ENCODE measurements at regions of chr3 and their contacts with region 1.

Region 1: GRCh38 chr3:13648060-13649001 is 99.4 kb downstream of the FBLN2 start:
- DNase-seq: peak; percentile 82
- H3K4me3 Mint-ChIP-seq: no peak overlapping the region
- H3K27ac Mint-ChIP-seq: no peak overlapping the region
- H3K4me1 Mint-ChIP-seq: peaks cover 18% of the 10 kb centered on the region
- H3K27me3 Mint-ChIP-seq: peaks cover 14% of the 10 kb centered on the region

Region 2: DNA sequence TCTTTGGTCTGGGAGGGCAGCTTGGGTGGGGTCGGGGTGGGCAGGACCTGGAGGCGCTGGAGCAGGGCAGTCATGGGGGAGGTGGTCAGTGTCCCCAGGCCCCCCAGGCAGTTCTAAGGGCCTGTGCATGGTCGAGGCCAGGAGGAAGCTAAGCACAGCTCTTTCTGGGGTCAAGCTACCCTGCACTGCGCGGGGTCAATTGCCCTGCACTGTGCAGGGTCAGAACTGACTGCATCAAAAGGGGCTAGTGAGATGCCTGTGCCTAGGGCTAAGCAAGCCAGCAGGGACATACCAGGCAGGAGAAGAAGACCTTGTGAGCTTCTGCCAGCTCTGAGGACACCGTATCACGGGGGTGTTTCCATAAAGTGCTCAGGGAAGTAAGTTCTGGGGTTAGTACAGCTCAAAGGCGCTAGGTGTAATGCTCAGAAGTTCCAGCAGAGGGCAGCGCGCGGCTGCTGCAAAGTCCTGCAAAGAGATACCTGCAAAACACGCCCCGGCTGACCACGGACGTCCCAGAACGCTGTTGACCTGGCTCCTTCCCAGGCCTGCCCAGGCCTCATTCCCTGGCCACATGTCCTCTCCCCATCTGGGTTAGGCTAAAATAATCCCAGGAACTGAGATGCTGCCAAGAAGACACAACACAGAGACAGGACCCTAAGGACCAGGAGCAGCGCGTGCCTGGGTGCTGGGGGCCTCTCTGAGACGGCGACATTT is 556.3 kb before region 1 on chr3:
- CTCF ChIA-PET with region 1: interaction called, 3 read pairs
- intact Hi-C with region 1: loop called (anchors 1 kb)
- DNase-seq: peak; percentile 89
- H3K4me3 Mint-ChIP-seq: no peak overlapping the region
- H3K27ac Mint-ChIP-seq: no peak overlapping the region
- H3K4me1 Mint-ChIP-seq: peaks cover 5% of the 10 kb centered on the region
- H3K27me3 Mint-ChIP-seq: no peaks in the 10 kb centered on the region

Region 3: DNA sequence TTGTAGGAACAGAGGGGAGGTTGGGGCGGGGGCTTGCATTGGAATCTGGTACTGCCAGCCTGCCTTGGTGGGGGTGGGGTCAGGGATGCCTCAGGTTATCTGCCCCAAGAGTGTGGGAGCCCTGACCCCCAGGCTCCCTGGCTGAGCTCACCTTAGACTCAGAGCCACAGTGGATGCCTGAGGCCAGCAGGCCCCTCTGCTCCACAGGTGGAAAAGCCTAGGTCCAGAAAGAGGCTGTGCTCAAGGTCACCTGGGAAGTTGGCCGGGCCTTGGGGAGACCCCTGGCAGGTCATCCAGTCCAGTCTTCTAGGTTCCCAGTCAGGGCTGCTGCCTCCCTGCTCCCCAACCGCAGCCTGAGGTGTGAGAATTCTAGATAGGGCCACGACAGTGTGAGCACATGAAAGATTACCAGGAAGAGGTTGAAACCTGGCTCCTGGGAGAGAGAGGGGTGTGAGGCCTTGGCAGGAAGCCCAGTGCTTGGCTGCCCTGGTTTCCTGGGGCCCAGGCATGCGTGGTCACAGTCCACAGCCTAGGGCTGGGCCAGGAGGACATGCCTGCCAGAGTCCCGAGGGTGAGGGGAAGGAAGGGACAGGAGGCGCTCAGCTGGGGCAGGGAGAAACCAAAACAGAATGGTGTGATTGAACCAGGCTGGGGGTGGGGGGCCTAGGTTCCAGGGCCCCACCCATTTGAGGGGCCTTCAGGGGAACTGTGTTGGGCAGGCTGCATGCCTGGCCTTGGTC is 163.3 kb before region 1 on chr3:
- CTCF ChIA-PET with region 1: interaction called, 344 read pairs
- intact Hi-C with region 1: loop called (anchors 5 kb)
- DNase-seq: peak; percentile 25
- H3K4me3 Mint-ChIP-seq: no peak overlapping the region
- H3K27ac Mint-ChIP-seq: no peak overlapping the region
- H3K4me1 Mint-ChIP-seq: peaks cover 19% of the 10 kb centered on the region
- H3K27me3 Mint-ChIP-seq: no peaks in the 10 kb centered on the region

Region 4: DNA sequence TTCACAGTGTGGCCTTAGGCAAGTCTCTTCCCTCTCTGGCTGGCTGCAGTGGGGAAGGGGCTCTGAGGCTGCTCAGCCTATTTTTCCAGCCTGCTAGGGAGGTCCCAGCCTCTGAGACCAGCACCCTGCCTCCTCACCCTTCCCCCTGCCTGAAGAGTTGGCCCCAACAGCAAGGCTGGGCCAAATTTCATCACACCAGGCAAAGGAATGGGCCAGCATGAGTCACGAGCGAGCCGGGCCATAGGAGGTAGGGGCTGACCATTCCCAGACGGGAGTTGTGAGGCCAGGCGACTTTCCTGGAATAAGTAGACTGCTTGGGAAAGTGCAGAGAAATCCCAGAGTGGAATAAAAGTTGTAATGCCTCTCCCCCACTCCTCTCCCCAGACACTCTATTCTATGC is 105.1 kb before region 1 on chr3:
- CTCF ChIA-PET with region 1: interaction called, 9 read pairs
- intact Hi-C with region 1: loop called (anchors 5 kb)
- DNase-seq: no peak
- H3K4me3 Mint-ChIP-seq: no peak overlapping the region
- H3K27ac Mint-ChIP-seq: no peak overlapping the region
- H3K4me1 Mint-ChIP-seq: peaks cover 19% of the 10 kb centered on the region
- H3K27me3 Mint-ChIP-seq: peaks cover 19% of the 10 kb centered on the region

Region 5: GRCh38 chr3:14124615-14125190 is 476.4 kb after region 1 on chr3 and contains the starts of genes CHCHD4 and TMEM43:
- CTCF ChIA-PET with region 1: no interaction called
- intact Hi-C with region 1: loop called (anchors 10 kb)
- DNase-seq: peak; percentile 99
- H3K4me3 Mint-ChIP-seq: peak within 1 kb of the TSS; percentile 93
- H3K27ac Mint-ChIP-seq: peak within 1 kb of the TSS; percentile 92
- H3K4me1 Mint-ChIP-seq: peaks cover 50% of the 10 kb centered on the region
- H3K27me3 Mint-ChIP-seq: no peaks in the 10 kb centered on the region
- total RNA-seq, gene CHCHD4: 16.2 to 17.9 TPM
- total RNA-seq, gene TMEM43: 18.3 to 19.8 TPM

Measured in activated naive CD4-positive, alpha-beta T cell treated with anti-CD3 and anti-CD28 coated beads for 36 hours (primary cell).